Aorta (tissue), 5 donors: ENCODE measurements at regions of chr1 and their contacts with region 1.

Region 1: DNA sequence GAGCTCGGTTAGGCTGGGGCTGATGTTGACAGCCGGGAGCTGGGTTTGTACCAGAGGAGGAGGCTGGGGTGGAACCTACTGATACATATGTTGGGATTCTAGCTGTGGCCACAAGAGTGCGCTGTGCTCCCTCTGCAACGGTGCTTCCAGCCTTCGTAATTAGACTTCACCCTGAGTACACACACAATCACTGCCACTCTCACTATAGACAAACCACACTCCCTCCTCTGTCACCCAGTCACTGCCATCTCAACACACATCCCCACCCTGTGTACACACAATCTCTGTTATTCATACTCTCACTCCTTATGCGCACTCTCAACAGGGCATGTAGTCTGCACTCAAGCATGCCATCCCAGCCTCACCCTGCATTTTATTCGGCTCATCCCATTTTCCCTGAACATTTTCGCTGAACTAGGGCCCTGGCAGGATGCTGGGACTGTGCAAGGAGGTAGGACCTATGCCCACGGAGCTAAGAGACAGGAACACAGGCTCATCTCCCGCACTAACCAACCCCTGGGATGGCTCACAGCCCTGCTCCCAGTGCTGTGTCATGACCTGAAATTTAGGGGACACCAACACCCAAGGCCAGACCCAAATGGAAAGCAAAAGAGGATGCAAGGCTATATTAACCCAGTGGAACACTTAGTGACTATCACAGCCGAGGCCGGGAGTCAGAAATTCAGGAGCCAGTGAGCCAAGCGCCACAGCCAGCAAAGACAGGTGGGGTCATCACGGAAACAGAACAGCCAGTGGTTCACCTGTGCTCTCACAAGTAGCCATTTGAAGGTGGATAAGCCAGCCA is 5.7 kb downstream of the GJB3 start:
- DNase-seq: peak; percentile 82 to 89
- ATAC-seq: peak; percentile 82
- H3K4me3 ChIP-seq: no peak overlapping the region
- H3K27ac ChIP-seq: no peak overlapping the region
- H3K4me1 ChIP-seq: no peaks in the 10 kb centered on the region
- H3K27me3 ChIP-seq: no peaks in the 10 kb centered on the region

Region 2: DNA sequence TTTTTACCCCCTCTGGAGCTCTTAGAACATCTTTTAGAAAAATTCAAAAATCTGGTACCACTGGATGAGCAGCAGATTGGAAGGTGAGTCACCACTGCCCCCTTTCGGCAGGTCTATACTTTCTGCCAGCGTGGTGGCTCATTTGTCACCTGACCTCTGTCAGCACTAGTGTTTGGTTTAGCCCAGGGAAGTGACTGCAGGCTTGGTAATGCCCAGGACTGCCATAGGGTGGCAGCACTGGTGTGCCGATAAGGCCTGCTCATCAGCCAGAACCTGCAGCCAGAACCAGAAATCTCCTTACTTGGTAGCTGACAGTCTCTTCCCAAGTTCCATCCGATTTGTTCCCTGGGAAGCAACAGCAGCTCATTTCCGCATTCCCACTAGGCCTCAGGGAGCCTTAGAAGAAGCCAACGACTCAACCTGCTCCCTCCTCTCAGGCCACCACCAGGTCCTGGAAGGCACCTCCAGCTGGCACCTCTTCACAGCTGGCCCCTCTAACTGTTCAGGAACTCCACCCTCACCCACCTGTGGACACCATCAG is 66.0 kb after region 1 on chr1:
- intact Hi-C with region 1: loop called (anchors 1 kb)
- DNase-seq: peak; percentile 94 to 95
- ATAC-seq: peak; percentile 97
- H3K4me3 ChIP-seq: no peak overlapping the region
- H3K27ac ChIP-seq: peak overlapping the region; percentile 14 to 92
- H3K4me1 ChIP-seq: peaks cover 2 to 7% of the 10 kb centered on the region in 2 donors
- H3K27me3 ChIP-seq: no peaks in the 10 kb centered on the region

Region 3: GRCh38 chr1:34859446-34860200 is 72.9 kb after region 1 on chr1 and contains the start of gene SMIM12:
- intact Hi-C with region 1: loop called in 1 of 2 experiments (anchors 2 kb)
- DNase-seq: peak; percentile 97 to 99
- ATAC-seq: peak; percentile 98
- H3K4me3 ChIP-seq: peak within 1 kb of the TSS; percentile 84 to 94
- H3K27ac ChIP-seq: peak within 1 kb of the TSS; percentile 24 to 88
- H3K4me1 ChIP-seq: peaks cover 0 to 3% of the 10 kb centered on the region in 2 donors
- H3K27me3 ChIP-seq: no peaks in the 10 kb centered on the region
- total RNA-seq, gene SMIM12: 38.1 to 58.8 TPM